Activated B cell treated with CpG ODN at 0.5 μM for 24 hours (primary cell): ENCODE measurements at regions of chr9 and their contacts with region 1.

Region 1: GRCh38 chr9:99231711-99232110 is 9.6 kb downstream of the SEC61B start:
- DNase-seq: peak; percentile 46
- ATAC-seq: peak; percentile 11
- H3K4me3 Mint-ChIP-seq: peak overlapping the region; percentile 47
- H3K27ac Mint-ChIP-seq: peak overlapping the region; percentile 65
- H3K4me1 Mint-ChIP-seq: peaks cover 45% of the 10 kb centered on the region
- H3K27me3 Mint-ChIP-seq: no peaks in the 10 kb centered on the region
- CTCF ChIP-seq: no peak

Region 2: GRCh38 chr9:99253772-99254431 is 22.2 kb after region 1 on chr9:
- CTCF ChIA-PET with region 1: interaction called, 32 read pairs
- POLR2A ChIA-PET with region 1: interaction called, 27 read pairs
- intact Hi-C with region 1: loop called (anchors 1 kb)
- DNase-seq: peak; percentile 73
- ATAC-seq: peak; percentile 87
- H3K4me3 Mint-ChIP-seq: peak overlapping the region; percentile 59
- H3K27ac Mint-ChIP-seq: peak overlapping the region; percentile 94
- H3K4me1 Mint-ChIP-seq: peaks cover 49% of the 10 kb centered on the region
- H3K27me3 Mint-ChIP-seq: no peaks in the 10 kb centered on the region
- CTCF ChIP-seq: no peak

Region 3: DNA sequence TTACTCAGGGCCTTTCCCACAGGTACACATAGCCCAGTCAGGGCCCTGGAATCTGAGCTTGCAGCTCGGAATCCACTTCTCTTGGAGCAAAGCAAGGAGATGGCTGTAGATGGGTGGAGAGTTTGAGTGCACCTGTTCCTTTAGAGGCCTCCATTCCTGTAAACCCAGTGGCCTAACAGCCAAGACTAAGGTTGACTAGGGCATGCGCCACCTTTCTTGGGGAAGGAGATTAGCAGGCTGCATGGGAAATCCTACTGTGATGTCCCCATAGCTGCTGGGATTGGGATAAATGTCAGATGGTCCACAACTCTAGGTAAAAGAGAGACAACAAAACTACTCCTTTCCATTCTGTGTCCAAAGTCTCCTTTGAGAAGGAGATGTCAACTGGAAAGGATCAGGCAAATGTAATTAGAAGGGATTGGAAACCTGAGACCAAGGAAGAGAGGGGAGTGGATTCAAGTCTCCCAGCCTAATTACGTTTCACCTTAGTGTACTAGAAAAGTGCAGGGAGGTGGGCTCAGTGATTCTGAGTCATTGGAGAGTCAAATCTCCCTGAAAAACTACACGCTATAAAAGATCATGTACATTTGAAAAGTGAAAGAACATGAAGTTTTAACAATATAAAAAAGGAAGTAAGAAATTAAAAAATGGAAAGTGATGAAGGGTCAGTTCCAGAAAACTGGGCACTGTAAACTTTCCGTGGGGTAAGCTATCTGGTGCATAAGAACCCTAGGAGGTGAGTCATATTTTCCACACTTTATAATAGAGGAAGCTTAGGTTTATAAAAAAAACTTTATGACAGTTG is 94.6 kb after region 1 on chr9:
- CTCF ChIA-PET with region 1: no interaction called
- POLR2A ChIA-PET with region 1: interaction called, 6 read pairs
- intact Hi-C with region 1: loop called (anchors 5 kb)
- DNase-seq: no peak
- ATAC-seq: peak; percentile 72
- H3K4me3 Mint-ChIP-seq: peak overlapping the region; percentile 16
- H3K27ac Mint-ChIP-seq: peak overlapping the region; percentile 76
- H3K4me1 Mint-ChIP-seq: peaks cover 19% of the 10 kb centered on the region
- H3K27me3 Mint-ChIP-seq: peaks cover 6% of the 10 kb centered on the region
- CTCF ChIP-seq: no peak

Region 4: DNA sequence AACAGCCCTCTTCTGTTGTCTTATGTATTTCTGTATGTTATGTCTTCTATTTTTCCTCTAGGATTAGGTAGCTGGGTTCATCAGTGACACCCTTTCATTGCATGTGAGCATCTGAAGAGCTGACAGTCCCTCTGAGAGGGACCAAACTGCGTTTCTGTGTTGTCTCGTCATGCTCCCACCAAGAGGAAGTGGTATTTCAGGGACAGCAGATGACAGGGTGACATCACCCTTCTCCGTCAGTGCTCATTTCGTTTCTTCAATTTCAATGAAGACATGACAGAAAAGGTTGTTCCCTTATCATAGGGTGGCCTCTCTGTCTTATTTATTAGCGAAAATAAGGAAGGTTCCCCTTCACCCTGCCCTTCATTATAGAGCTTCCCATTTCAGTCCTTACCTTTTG is 364.1 kb after region 1 on chr9:
- CTCF ChIA-PET with region 1: no interaction called
- POLR2A ChIA-PET with region 1: no interaction called
- intact Hi-C with region 1: loop called (anchors 1 kb)
- DNase-seq: no peak
- ATAC-seq: peak; percentile 78
- H3K4me3 Mint-ChIP-seq: peak overlapping the region; percentile 21
- H3K27ac Mint-ChIP-seq: peak overlapping the region; percentile 85
- H3K4me1 Mint-ChIP-seq: peaks cover 54% of the 10 kb centered on the region
- H3K27me3 Mint-ChIP-seq: no peaks in the 10 kb centered on the region
- CTCF ChIP-seq: no peak

Region 5: DNA sequence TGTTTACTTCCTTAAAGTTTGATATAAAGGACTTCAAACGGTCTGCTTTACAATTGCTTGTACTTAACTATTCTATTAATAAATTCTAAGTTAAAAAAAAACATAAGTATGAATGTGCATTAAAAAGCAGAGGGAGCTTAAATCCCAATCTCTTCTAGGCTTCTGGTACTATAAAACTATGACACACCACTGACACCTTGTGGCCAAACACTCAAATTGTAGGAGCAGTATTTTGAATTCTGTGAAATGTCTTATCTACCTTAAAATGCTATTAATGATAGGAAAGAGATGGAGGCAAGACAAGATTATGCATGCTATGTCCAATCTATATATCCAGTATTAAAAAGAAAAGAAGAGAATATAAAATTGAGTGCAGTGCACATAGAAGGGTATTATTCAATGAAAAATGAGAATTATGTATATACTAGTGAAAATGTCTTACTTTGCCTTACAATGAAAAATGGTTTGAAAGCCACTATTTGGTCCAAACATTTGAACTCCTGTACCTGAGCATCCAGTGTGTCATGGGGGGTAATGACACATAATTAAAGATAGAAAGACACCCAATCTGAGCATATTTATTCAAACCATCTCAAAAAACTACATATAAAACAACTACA is 779.5 kb after region 1 on chr9:
- CTCF ChIA-PET with region 1: interaction called, 19 read pairs
- POLR2A ChIA-PET with region 1: no interaction called
- intact Hi-C with region 1: loop called (anchors 1 kb)
- DNase-seq: no peak
- ATAC-seq: peak; percentile 62
- H3K4me3 Mint-ChIP-seq: no peak overlapping the region
- H3K27ac Mint-ChIP-seq: no peak overlapping the region
- H3K4me1 Mint-ChIP-seq: no peaks in the 10 kb centered on the region
- H3K27me3 Mint-ChIP-seq: no peaks in the 10 kb centered on the region
- CTCF ChIP-seq: no peak

Region 6: GRCh38 chr9:100322954-100323536 is 1091.3 kb after region 1 on chr9:
- CTCF ChIA-PET with region 1: interaction called, 11 read pairs
- POLR2A ChIA-PET with region 1: interaction called, 3 read pairs
- intact Hi-C with region 1: no loop called
- DNase-seq: no peak
- ATAC-seq: no peak
- H3K4me3 Mint-ChIP-seq: no peak overlapping the region
- H3K27ac Mint-ChIP-seq: no peak overlapping the region
- H3K4me1 Mint-ChIP-seq: peaks cover 2% of the 10 kb centered on the region
- H3K27me3 Mint-ChIP-seq: no peaks in the 10 kb centered on the region
- CTCF ChIP-seq: no peak